H1 (cell line): ENCODE measurements at regions of chr6 and their contacts with region 1.

Region 1: GRCh38 chr6:167350731-167351655 is 26.1 kb downstream of the TTLL2 start:
- DNase-seq: peak; percentile 89 to 99
- H3K4me3 ChIP-seq: peak overlapping the region; percentile 30 to 57 (median 43)
- H3K27ac ChIP-seq: no peak overlapping the region
- H3K4me1 ChIP-seq: peaks cover 0 to 3% (median 0%) of the 10 kb centered on the region in 4 experiments; a peak in 2 of 7 replicates
- H3K27me3 ChIP-seq: peaks cover 5 to 22% (median 18%) of the 10 kb centered on the region in 4 experiments
- CTCF ChIP-seq: peak; percentile 86 to 98 (median 88)
- EP300 ChIP-seq: peak; percentile 28 to 65; a peak in 2 of 3 replicates
- POLR2A ChIP-seq: peak in 1 of 2 experiments; percentile 35; a peak in 1 of 3 replicates
- RAD21 ChIP-seq: peak; percentile 73 to 80

Region 2: DNA sequence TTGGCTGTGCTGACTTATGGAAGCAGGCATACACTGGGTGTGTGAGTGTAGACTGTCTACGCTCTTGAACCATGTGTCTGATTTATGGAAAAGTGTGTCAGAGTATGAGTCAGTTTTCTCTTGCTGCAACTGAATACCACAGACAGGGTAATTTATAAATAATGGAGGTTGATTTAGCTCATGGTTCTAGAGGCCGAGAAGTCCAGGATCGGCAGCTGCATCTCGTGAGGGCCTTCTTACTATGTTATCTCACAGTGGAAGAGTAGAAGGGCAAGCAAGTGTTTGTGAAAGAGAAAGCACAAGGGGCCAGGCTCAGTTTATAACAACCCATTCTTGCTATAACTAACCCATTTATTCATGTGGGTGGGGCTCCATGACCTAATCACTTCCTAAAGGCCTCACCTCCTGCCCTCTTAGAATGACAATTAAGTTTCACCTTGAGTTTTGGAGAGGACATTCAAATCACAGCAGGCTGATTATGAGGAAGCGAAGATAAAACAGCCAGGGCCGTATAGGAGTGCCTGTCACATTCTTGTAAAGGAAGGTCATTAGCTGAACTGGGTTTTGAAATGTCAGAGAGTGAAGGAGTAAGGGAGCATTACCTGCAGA is 199.9 kb before region 1 on chr6:
- CTCF ChIA-PET with region 1: no interaction called
- POLR2A ChIA-PET with region 1: no interaction called
- DNase-seq: no peak
- H3K4me3 ChIP-seq: no peak overlapping the region
- H3K27ac ChIP-seq: no peak overlapping the region
- H3K4me1 ChIP-seq: peaks cover 8 to 22% (median 19%) of the 10 kb centered on the region in 4 experiments
- H3K27me3 ChIP-seq: peaks cover 0 to 3% (median 0%) of the 10 kb centered on the region in 4 experiments; a peak in 2 of 7 replicates
- CTCF ChIP-seq: no peak
- EP300 ChIP-seq: no peak
- POLR2A ChIP-seq: no peak
- RAD21 ChIP-seq: no peak

Region 3: GRCh38 chr6:167291623-167292300 is 59.2 kb before region 1 on chr6:
- CTCF ChIA-PET with region 1: interaction called, 20 read pairs
- POLR2A ChIA-PET with region 1: no interaction called
- DNase-seq: no peak
- H3K4me3 ChIP-seq: no peak overlapping the region
- H3K27ac ChIP-seq: no peak overlapping the region
- H3K4me1 ChIP-seq: peaks cover 0 to 10% (median 3%) of the 10 kb centered on the region in 4 experiments; a peak in 3 of 7 replicates
- H3K27me3 ChIP-seq: no peaks in the 10 kb centered on the region
- CTCF ChIP-seq: no peak
- EP300 ChIP-seq: no peak
- POLR2A ChIP-seq: no peak
- RAD21 ChIP-seq: no peak

Region 4: GRCh38 chr6:167311286-167311685 is 39.7 kb before region 1 on chr6:
- CTCF ChIA-PET with region 1: interaction called, 11 read pairs
- POLR2A ChIA-PET with region 1: no interaction called
- DNase-seq: no peak
- H3K4me3 ChIP-seq: no peak overlapping the region
- H3K27ac ChIP-seq: no peak overlapping the region
- H3K4me1 ChIP-seq: peaks cover 7 to 19% (median 11%) of the 10 kb centered on the region in 4 experiments
- H3K27me3 ChIP-seq: no peaks in the 10 kb centered on the region; a peak in 1 of 7 replicates
- CTCF ChIP-seq: no peak
- EP300 ChIP-seq: no peak
- POLR2A ChIP-seq: no peak
- RAD21 ChIP-seq: no peak

Region 5: GRCh38 chr6:167329014-167329413 is 22.0 kb before region 1 on chr6:
- CTCF ChIA-PET with region 1: interaction called, 17 read pairs
- POLR2A ChIA-PET with region 1: no interaction called
- DNase-seq: no peak
- H3K4me3 ChIP-seq: no peak overlapping the region
- H3K27ac ChIP-seq: no peak overlapping the region
- H3K4me1 ChIP-seq: no peaks in the 10 kb centered on the region; a peak in 1 of 7 replicates
- H3K27me3 ChIP-seq: no peaks in the 10 kb centered on the region
- CTCF ChIP-seq: peak; percentile 25 to 37 (median 35); a peak in 3 of 4 replicates
- EP300 ChIP-seq: no peak
- POLR2A ChIP-seq: no peak
- RAD21 ChIP-seq: peak; percentile 28 to 43